ENCODE measurements at regions of chr6 and their contacts with region 1.

Region 1: DNA sequence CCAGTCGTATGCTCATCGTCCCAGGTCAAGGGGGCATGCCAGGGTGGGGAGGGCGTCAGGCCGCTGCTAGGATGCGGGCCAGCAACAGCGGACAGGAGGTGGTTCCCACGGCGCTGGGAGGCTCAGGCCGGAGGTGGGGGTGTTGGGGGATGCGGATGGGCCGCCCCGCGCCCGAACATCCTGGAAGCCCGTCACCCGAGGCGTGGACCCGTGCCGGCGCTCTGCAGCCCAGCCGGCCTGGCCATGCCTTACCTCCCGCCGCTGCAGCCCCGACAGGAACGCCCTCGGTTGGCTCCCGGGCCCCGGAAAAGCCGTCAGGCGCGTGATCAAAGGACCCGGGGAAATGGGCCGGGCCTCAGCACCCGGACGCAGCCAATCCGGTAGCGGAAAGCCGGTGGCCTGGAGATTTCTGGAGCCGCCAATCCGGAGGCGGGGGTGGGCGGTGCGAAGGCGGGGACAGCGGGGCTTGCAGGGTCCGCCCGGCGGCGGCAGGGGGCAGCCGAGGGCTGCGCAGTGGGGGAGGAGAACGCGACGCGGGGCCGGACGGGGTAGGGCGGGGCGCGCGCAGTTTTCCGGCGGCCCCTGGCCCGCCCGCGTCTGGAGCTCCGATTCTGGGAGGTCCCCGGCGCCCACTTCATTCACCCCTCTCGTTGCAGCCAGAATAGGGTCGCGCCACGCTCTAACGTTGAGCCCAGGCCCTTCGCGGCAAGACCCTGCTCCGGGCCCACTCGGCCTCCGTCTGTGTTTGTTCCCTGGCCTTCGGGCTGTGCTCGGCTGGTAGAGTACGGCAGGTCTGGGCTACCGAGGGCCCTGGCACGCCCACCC is at the start of gene SMIM29:
- DNase-seq: peak; percentile 96 to 99 (median 98)
- ATAC-seq: peak; percentile 94 to 97 (median 96)
- H3K4me3 ChIP-seq: peak within 1 kb of the TSS; percentile 66 to 73 (median 70)
- H3K27ac ChIP-seq: peak within 1 kb of the TSS; percentile 82 to 90 (median 86)
- H3K4me1 ChIP-seq: no peaks in the 10 kb centered on the region
- H3K27me3 ChIP-seq: no peaks in the 10 kb centered on the region
- CTCF ChIP-seq: peak; percentile 93 to 97 (median 95)
- total RNA-seq, gene SMIM29: 5.9 to 12.4 (median 7.1) TPM

Region 2: GRCh38 chr6:34055223-34055933 is 193.6 kb before region 1 on chr6:
- intact Hi-C with region 1: no loop called
- DNase-seq: peak; percentile 16 to 82 (median 44)
- ATAC-seq: peak; percentile 53 to 85 (median 80)
- H3K4me3 ChIP-seq: no peak overlapping the region
- H3K27ac ChIP-seq: no peak overlapping the region
- H3K4me1 ChIP-seq: no peaks in the 10 kb centered on the region
- H3K27me3 ChIP-seq: no peaks in the 10 kb centered on the region
- CTCF ChIP-seq: peak; percentile 53 to 72 (median 65)

Region 3: GRCh38 chr6:34414999-34415858 is 166.3 kb after region 1 on chr6:
- intact Hi-C with region 1: loop called in 2 of 3 experiments (anchors 5 to 10 kb)
- DNase-seq: peak in 3 of 6 donors; percentile 67 to 79 (median 74)
- ATAC-seq: peak; percentile 94 to 98 (median 96)
- H3K4me3 ChIP-seq: no peak overlapping the region
- H3K27ac ChIP-seq: peak overlapping the region; percentile 24 to 85 (median 66)
- H3K4me1 ChIP-seq: peaks cover 6 to 11% (median 8%) of the 10 kb centered on the region in 3 donors
- H3K27me3 ChIP-seq: no peaks in the 10 kb centered on the region
- CTCF ChIP-seq: peak; percentile 3 to 67 (median 56)

Measured in pancreas (tissue), 10 donors.